Transverse colon (tissue), 4 donors: ENCODE measurements at regions of chr22 and their contacts with region 1.

Region 1: DNA sequence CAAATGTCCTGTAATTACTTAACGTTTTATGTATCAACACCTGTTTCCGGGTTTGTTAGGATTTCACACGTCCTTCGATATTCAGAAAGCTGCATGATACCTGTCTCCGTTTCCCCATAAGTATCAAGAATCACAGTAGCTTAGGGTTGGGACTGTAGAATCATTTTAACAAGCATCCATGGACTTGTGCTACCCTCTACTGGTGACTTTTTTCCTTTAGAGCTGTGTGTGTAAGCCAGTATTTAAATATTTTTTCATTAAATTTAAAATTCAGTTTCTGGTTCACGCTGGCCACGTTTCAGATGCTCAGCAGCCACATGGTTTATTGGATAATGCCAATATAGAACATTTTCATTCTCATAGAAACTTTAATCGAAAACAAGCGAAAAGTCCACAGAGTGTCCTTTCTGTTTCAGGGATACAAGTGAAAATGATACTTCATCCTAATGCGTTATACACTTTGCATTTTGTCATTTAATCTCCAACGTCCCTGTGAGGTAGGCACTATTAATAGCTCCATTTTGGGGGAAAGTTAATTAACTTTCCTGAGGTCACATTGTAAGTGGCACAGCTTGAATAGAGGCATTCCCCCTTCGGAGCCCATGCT is 61.5 kb upstream of the SLC25A18 start:
- DNase-seq: peak; percentile 9
- H3K4me3 ChIP-seq: no peak overlapping the region
- H3K27ac ChIP-seq: no peak overlapping the region
- H3K4me1 ChIP-seq: no peaks in the 10 kb centered on the region
- H3K27me3 ChIP-seq: no peaks in the 10 kb centered on the region
- CTCF ChIP-seq: peak; percentile 56 to 81 (median 66)
- EP300 ChIP-seq: no peak
- POLR2A ChIP-seq: no peak

Region 2: GRCh38 chr22:17057959-17058814 is 443.6 kb before region 1 on chr22:
- in situ Hi-C with region 1: loop called in 1 of 4 experiments (anchors 25 kb)
- intact Hi-C with region 1: no loop called
- DNase-seq: peak; percentile 60
- H3K4me3 ChIP-seq: no peak overlapping the region
- H3K27ac ChIP-seq: no peak overlapping the region
- H3K4me1 ChIP-seq: no peaks in the 10 kb centered on the region
- H3K27me3 ChIP-seq: peaks cover 10% of the 10 kb centered on the region
- CTCF ChIP-seq: peak; percentile 73 to 88 (median 86)
- EP300 ChIP-seq: no peak
- POLR2A ChIP-seq: no peak

Region 3: GRCh38 chr22:17077255-17077654 is 424.5 kb before region 1 on chr22:
- in situ Hi-C with region 1: loop called (anchors 5 to 25 kb)
- intact Hi-C with region 1: no loop called
- DNase-seq: no peak
- H3K4me3 ChIP-seq: no peak overlapping the region
- H3K27ac ChIP-seq: no peak overlapping the region
- H3K4me1 ChIP-seq: no peaks in the 10 kb centered on the region
- H3K27me3 ChIP-seq: no peaks in the 10 kb centered on the region
- CTCF ChIP-seq: no peak
- EP300 ChIP-seq: no peak
- POLR2A ChIP-seq: no peak

Region 4: GRCh38 chr22:17171313-17172171 is 330.2 kb before region 1 on chr22:
- in situ Hi-C with region 1: loop called (anchors 10 to 25 kb)
- intact Hi-C with region 1: no loop called
- DNase-seq: peak; percentile 92
- H3K4me3 ChIP-seq: peak overlapping the region; percentile 61 to 82 (median 74)
- H3K27ac ChIP-seq: peak overlapping the region; percentile 91 to 94 (median 92)
- H3K4me1 ChIP-seq: peaks cover 0 to 12% (median 7%) of the 10 kb centered on the region in 4 donors
- H3K27me3 ChIP-seq: no peaks in the 10 kb centered on the region
- CTCF ChIP-seq: peak; percentile 70 to 87 (median 79)
- EP300 ChIP-seq: no peak
- POLR2A ChIP-seq: peak; percentile 19

Region 5: DNA sequence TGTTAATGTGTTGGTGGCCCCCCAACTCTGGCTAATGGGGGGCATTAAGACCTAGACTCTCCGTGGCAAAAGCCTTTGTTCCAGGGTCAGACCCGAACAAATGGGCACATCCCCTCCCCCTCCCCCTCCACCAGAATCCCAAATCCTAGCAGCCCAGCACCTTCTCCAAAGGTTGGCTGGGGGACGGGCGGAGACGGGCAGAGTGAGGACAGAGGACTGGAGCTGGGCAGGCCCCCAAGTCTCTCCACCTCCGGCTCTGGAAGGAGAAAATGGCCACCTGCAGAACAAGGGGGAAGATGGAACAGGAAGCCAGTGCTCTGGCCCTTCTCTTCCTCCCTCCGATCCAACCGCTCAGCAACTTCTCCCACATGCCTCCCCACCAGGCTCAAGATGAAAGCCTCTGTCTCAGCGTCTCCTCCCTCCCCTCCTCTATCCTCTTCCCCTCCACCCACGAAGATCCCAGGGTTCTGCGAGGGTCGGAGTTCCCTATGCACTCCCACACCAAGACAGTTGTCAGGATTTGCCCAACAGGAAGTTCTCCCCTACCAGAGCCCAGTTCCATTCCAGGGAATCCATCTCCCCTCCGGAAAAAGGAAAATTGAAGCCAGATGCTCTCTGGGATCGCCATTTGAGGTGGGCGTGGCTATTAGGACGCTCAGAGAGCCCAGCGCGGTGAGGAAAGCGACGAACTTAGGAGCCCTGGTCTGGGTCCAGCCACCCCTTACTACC is 302.6 kb before region 1 on chr22:
- in situ Hi-C with region 1: loop called in 3 of 4 experiments (anchors 10 to 25 kb)
- intact Hi-C with region 1: no loop called
- DNase-seq: no peak
- H3K4me3 ChIP-seq: peak overlapping the region in 2 of 4 donors; percentile 14 to 34
- H3K27ac ChIP-seq: peak overlapping the region in 2 of 4 donors; percentile 17 to 58
- H3K4me1 ChIP-seq: no peaks in the 10 kb centered on the region
- H3K27me3 ChIP-seq: no peaks in the 10 kb centered on the region
- CTCF ChIP-seq: no peak
- EP300 ChIP-seq: no peak
- POLR2A ChIP-seq: no peak